T-cell (primary cell): ENCODE measurements at regions of chr2 and their contacts with region 1.

Region 1: GRCh38 chr2:196729418-196729817 is 70.1 kb downstream of the GTF3C3 start:
- DNase-seq: no peak
- ATAC-seq: no peak
- H3K4me3 ChIP-seq: no peak overlapping the region
- H3K4me3 Mint-ChIP-seq: no peak overlapping the region
- H3K27ac ChIP-seq: no peak overlapping the region
- H3K27ac Mint-ChIP-seq: no peak overlapping the region
- H3K4me1 ChIP-seq: no peaks in the 10 kb centered on the region
- H3K4me1 Mint-ChIP-seq: peaks cover 0 to 10% (median 3%) of the 10 kb centered on the region in 3 donors
- H3K27me3 ChIP-seq: no peaks in the 10 kb centered on the region
- H3K27me3 Mint-ChIP-seq: no peaks in the 10 kb centered on the region

Region 2: GRCh38 chr2:196431957-196432356 is 297.5 kb before region 1 on chr2:
- CTCF ChIA-PET with region 1: no interaction called
- POLR2A ChIA-PET with region 1: no interaction called
- DNase-seq: no peak
- ATAC-seq: no peak
- H3K4me3 ChIP-seq: no peak overlapping the region
- H3K4me3 Mint-ChIP-seq: no peak overlapping the region
- H3K27ac ChIP-seq: no peak overlapping the region
- H3K27ac Mint-ChIP-seq: no peak overlapping the region
- H3K4me1 ChIP-seq: no peaks in the 10 kb centered on the region
- H3K4me1 Mint-ChIP-seq: peaks cover 0 to 10% (median 4%) of the 10 kb centered on the region in 3 donors
- H3K27me3 ChIP-seq: peaks cover 0 to 3% of the 10 kb centered on the region in 2 experiments
- H3K27me3 Mint-ChIP-seq: peaks cover 0 to 18% of the 10 kb centered on the region in 2 donors

Region 3: DNA sequence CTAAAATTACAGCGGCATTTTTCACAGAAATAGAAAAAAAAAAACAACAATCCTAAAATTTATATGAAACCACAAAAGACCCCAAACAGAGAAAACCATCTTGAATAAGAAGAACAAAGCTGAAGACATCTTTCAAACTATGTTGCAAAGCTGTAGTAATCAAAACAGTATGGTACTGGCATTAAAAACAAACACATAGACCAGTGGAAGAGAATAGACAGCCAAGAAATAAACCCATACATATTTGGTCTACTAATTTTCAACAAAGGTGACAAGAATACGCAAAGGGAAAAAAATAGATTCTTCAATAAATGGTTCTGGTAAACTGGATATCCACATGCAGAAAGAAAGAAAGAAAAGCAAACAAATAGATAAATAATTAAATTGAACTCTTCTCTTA is 98.9 kb before region 1 on chr2:
- CTCF ChIA-PET with region 1: no interaction called
- POLR2A ChIA-PET with region 1: interaction called in 1 of 2 experiments, 14 read pairs
- DNase-seq: no peak
- ATAC-seq: no peak
- H3K4me3 ChIP-seq: no peak overlapping the region
- H3K4me3 Mint-ChIP-seq: no peak overlapping the region
- H3K27ac ChIP-seq: no peak overlapping the region
- H3K27ac Mint-ChIP-seq: no peak overlapping the region
- H3K4me1 ChIP-seq: no peaks in the 10 kb centered on the region
- H3K4me1 Mint-ChIP-seq: no peaks in the 10 kb centered on the region
- H3K27me3 ChIP-seq: peaks cover 0 to 8% of the 10 kb centered on the region in 2 experiments
- H3K27me3 Mint-ChIP-seq: peaks cover 8 to 20% of the 10 kb centered on the region in 2 donors